ENCODE measurements at regions of chr9 and their contacts with region 1.

Region 1: GRCh38 chr9:97710356-97711222 is 13.4 kb upstream of the XPA start:
- DNase-seq: peak; percentile 59
- H3K4me3 ChIP-seq: no peak overlapping the region
- H3K27ac ChIP-seq: no peak overlapping the region
- H3K4me1 ChIP-seq: peaks cover 43% of the 10 kb centered on the region
- H3K27me3 ChIP-seq: no peaks in the 10 kb centered on the region
- CTCF ChIP-seq: peak; percentile 90

Region 2: DNA sequence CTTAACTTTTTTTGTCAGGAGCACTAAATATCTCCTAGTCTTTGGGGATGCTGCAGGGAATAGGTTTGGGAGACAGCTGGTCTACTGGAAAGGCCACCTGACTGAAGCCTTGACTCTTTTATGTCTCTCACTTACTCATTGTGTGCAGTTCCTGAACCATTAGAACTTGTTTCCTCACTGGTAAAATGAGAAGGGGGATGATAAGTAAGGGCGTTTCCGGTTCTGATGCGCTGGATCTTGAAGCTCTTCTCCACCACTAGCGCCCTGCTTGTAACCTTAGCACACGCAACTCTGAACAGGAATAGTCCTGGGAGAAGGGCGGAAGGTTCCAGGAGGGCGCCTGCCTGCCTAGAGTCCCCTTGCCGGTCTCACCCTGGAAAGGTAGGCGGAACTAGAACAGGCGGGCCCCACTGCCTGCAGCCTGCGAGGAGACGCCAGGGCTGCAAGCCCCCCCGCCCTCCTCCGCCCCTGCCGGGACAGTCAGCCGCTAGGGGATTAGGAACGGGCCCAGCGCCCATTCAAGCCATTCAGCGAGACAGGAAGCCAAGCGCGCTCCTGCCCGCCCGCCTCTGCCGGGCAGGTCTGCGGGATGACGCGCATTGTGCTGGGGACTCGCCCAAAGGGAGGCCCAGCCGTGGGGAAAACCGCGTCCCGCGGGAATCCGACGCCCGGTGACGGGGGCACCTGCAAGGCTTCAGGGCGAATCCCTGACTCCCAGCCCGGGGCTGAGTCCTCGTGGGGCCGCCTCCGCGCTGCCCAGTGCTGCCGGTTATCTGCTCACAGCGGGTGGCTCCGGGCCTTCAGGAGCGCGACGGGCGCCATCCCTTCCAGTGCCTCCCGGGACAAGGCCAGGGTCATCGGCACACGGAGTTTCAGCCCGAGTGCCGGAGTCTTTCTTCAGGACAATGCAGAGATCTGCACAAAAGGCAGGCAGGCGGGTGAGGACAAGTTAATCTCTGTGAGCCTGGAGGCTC is 30.5 kb after region 1 on chr9:
- CTCF ChIA-PET with region 1: no interaction called
- POLR2A ChIA-PET with region 1: no interaction called
- intact Hi-C with region 1: loop called (anchors 1 kb)
- DNase-seq: peak in 1 of 2 experiments; percentile 82
- H3K4me3 ChIP-seq: no peak overlapping the region
- H3K27ac ChIP-seq: no peak overlapping the region
- H3K4me1 ChIP-seq: no peaks in the 10 kb centered on the region
- H3K27me3 ChIP-seq: no peaks in the 10 kb centered on the region
- CTCF ChIP-seq: no peak

Region 3: DNA sequence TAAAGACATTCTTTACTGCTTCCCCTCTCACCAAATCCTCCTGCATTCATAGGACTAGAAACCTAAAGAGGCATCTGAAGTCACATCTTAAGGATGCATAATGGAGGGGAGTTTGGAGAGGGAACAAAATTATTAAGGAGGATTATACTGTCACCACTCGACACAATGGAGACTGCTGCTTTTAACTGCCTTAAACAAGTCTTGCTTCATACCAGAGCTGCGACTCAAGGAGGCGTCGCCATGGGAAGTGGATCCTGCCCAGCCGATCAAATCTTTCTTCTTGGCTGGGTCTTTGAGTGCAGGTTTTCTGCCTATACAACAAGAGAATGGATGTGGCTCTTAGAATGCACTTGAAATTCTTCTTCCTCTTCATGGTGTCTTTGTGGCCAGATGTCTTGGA is 75.8 kb after region 1 on chr9:
- CTCF ChIA-PET with region 1: no interaction called
- POLR2A ChIA-PET with region 1: interaction called, 8 read pairs
- intact Hi-C with region 1: loop called (anchors 1 kb)
- DNase-seq: peak; percentile 49 to 65
- H3K4me3 ChIP-seq: no peak overlapping the region
- H3K27ac ChIP-seq: peak overlapping the region; percentile 35
- H3K4me1 ChIP-seq: peaks cover 23% of the 10 kb centered on the region
- H3K27me3 ChIP-seq: no peaks in the 10 kb centered on the region
- CTCF ChIP-seq: no peak

Region 4: GRCh38 chr9:97853844-97854695 is 143.5 kb after region 1 on chr9:
- CTCF ChIA-PET with region 1: interaction called, 18 read pairs
- POLR2A ChIA-PET with region 1: interaction called, 8 read pairs
- intact Hi-C with region 1: loop called (anchors 1 kb)
- DNase-seq: peak in 1 of 2 experiments; percentile 53
- H3K4me3 ChIP-seq: peak overlapping the region; percentile 64
- H3K27ac ChIP-seq: peak overlapping the region; percentile 56; the same call in 1 of the 2 replicates
- H3K4me1 ChIP-seq: peaks cover 6% of the 10 kb centered on the region; the same call in 1 of the 2 replicates
- H3K27me3 ChIP-seq: no peaks in the 10 kb centered on the region
- CTCF ChIP-seq: no peak

Region 5: DNA sequence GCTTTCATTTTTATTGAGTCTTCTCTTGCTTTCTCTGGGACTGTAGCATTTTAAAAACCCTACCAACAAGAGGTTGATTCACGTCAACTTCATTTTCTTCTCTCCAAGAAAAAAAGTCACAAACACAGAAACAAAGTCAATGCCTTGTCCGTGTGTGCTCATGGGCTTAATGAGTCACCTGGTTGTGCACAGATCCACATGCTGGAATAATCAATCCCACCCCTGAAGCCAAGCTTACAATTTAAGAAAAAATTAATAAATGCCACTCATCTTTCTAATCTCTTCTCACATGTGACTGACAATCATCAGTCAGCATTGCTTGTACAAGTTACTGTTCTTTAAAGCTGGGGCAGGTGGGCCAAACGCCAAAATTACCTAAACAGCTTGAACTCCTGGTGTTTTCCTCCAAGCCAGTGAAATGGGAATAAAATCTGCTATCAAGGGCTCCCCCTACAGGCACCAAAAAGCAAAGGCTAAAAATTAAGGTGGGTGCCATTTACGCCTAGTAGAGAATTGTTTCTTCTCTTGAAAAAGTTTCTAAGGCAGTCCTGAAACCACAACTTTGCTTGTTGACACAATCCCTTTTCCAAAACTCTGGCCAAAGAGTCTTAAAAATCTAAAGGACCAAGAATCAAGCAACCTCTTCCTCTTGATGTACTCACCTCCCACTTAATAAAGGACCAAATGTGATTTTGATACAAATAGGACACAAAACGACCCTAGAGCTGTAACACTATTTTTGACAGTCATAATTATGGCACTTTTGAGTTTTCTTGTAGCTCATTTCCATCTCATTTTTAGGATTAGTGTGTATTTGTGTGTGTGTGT is 190.4 kb after region 1 on chr9:
- CTCF ChIA-PET with region 1: interaction called, 3 read pairs
- POLR2A ChIA-PET with region 1: interaction called, 7 read pairs
- intact Hi-C with region 1: loop called (anchors 1 kb)
- DNase-seq: peak in 1 of 2 experiments; percentile 43
- H3K4me3 ChIP-seq: no peak overlapping the region
- H3K27ac ChIP-seq: no peak overlapping the region
- H3K4me1 ChIP-seq: no peaks in the 10 kb centered on the region
- H3K27me3 ChIP-seq: no peaks in the 10 kb centered on the region
- CTCF ChIP-seq: peak; percentile 81

Region 6: GRCh38 chr9:98074115-98074990 is 363.8 kb after region 1 on chr9:
- CTCF ChIA-PET with region 1: no interaction called
- POLR2A ChIA-PET with region 1: no interaction called
- intact Hi-C with region 1: loop called (anchors 5 kb)
- DNase-seq: peak; percentile 49 to 79
- H3K4me3 ChIP-seq: no peak overlapping the region
- H3K27ac ChIP-seq: peak overlapping the region; percentile 69
- H3K4me1 ChIP-seq: peaks cover 49% of the 10 kb centered on the region
- H3K27me3 ChIP-seq: no peaks in the 10 kb centered on the region
- CTCF ChIP-seq: peak; percentile 96

Region 7: DNA sequence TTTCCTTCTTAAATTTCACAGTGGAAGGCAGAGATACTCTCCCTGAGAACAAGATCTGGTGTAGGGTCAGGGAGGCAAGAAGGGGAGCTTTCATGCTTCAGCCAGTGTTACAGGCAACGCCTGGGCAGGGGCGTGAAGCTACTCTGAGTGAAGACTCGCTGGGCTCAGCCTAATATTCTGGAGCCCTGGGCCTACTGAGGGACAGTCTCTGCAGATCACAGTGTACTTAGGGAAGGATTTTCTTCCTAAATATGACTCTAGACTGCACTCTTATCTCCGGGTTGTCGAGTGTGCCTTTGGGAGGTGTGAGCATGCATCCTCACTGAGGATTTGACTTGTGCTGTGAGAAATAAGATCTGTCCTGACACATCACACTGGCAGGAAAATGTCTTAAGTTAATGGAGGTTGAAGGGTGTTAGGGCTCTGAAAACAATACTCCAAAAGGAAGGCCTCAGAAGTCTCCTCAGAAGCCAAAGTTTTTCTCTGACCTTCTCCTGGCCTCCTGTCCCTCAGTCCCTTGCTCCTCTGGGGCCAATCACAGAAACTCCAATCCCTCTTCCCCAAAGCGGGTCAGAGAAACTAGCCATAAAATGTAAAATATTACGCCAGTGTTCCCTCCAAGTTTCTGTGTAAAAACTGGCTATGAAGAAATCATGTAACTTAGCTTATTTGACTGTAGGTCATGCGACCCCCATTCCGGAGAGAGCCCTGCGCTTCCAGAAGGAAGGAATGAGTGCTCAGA is 701.7 kb after region 1 on chr9:
- CTCF ChIA-PET with region 1: no interaction called
- POLR2A ChIA-PET with region 1: no interaction called
- intact Hi-C with region 1: no loop called
- DNase-seq: no peak
- H3K4me3 ChIP-seq: no peak overlapping the region
- H3K27ac ChIP-seq: no peak overlapping the region
- H3K4me1 ChIP-seq: no peaks in the 10 kb centered on the region
- H3K27me3 ChIP-seq: no peaks in the 10 kb centered on the region; the same call in 1 of the 2 replicates
- CTCF ChIP-seq: no peak